ENCODE measurements at regions of chr1 and their contacts with region 1.

Region 1: DNA sequence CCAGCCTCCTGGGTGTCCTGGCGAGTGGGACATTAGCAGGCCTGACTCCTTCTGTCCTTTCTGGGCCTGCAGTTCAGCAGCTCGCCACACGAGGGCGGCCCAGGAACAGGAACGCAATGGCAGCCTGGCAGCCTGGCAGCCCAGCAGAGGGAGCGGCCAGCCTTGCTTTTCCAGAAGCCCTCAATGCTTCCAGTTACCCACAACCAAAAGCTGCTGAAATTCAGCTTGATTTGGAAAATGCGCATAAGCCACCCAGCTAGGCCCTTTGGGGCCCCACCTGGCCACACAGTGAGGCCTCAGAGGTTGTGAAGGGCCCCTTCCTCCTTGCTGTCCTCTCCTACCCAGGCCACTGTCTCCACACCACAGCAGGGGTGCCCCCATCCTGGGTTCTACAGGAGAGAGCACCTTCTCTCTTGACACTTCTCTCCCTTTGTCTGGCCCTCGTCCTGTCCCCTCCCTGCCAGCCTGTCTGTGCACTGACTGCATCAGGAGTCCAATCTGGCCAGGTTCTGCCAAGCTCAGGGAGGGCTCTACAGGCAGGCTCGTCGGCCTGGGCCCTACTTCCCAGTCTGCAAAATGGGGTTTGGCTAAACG is 103.4 kb upstream of the VAMP3 start:
- DNase-seq: peak; percentile 91
- H3K4me3 ChIP-seq: no peak overlapping the region
- H3K27ac ChIP-seq: no peak overlapping the region
- H3K4me1 ChIP-seq: peaks cover 0 to 9% (median 6%) of the 10 kb centered on the region in 4 donors
- H3K27me3 ChIP-seq: peaks cover 3% of the 10 kb centered on the region
- CTCF ChIP-seq: peak; percentile 99 to 100 (median 99)
- EP300 ChIP-seq: no peak
- POLR2A ChIP-seq: no peak

Region 2: GRCh38 chr1:7745791-7746190 is 78.1 kb after region 1 on chr1:
- in situ Hi-C with region 1: loop called (anchors 5 to 10 kb)
- intact Hi-C with region 1: no loop called
- DNase-seq: no peak
- H3K4me3 ChIP-seq: no peak overlapping the region
- H3K27ac ChIP-seq: no peak overlapping the region
- H3K4me1 ChIP-seq: no peaks in the 10 kb centered on the region
- H3K27me3 ChIP-seq: no peaks in the 10 kb centered on the region
- CTCF ChIP-seq: no peak
- EP300 ChIP-seq: no peak
- POLR2A ChIP-seq: no peak

Region 3: GRCh38 chr1:7752512-7753417 is 85.0 kb after region 1 on chr1:
- in situ Hi-C with region 1: loop called (anchors 5 to 10 kb)
- intact Hi-C with region 1: loop called (anchors 1 kb)
- DNase-seq: peak; percentile 62
- H3K4me3 ChIP-seq: peak overlapping the region in 2 of 4 donors; percentile 10 to 32
- H3K27ac ChIP-seq: no peak overlapping the region
- H3K4me1 ChIP-seq: peaks cover 0 to 11% (median 3%) of the 10 kb centered on the region in 4 donors
- H3K27me3 ChIP-seq: no peaks in the 10 kb centered on the region
- CTCF ChIP-seq: peak; percentile 75 to 89 (median 83)
- EP300 ChIP-seq: no peak
- POLR2A ChIP-seq: no peak

Region 4: DNA sequence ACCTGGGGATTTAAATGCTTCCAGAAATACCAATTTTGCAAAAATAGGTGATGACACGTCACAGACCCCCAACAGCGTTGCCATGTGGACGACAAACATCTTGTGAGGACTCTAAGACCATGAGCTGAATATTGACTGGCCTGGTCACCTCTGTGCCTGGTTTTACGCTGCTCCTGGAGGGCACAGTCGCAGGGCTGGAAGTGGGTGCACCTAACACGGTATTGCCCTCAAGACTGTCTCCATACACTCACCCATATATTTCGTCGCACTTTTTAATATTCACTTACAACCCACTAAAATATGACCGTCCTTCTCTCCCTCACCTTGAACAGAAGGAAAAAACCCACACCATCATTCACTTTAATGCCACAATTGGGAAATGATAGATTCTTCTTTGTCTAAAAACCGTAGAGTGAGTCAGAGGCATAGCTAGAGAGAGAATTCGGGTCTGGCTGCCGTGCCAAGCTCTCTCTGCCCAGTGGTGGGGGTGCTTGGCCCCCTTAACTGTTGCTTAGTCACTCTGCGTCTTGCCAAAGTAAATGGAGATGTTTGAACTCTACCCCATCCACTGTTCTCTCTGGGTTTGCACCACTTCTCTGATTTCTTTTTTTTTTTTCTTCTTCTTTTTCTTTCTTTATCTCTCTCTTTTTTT is 225.9 kb after region 1 on chr1:
- in situ Hi-C with region 1: no loop called
- intact Hi-C with region 1: loop called (anchors 10 kb)
- DNase-seq: no peak
- H3K4me3 ChIP-seq: no peak overlapping the region
- H3K27ac ChIP-seq: no peak overlapping the region
- H3K4me1 ChIP-seq: no peaks in the 10 kb centered on the region
- H3K27me3 ChIP-seq: peaks cover 8% of the 10 kb centered on the region
- CTCF ChIP-seq: no peak
- EP300 ChIP-seq: no peak
- POLR2A ChIP-seq: no peak

Region 5: DNA sequence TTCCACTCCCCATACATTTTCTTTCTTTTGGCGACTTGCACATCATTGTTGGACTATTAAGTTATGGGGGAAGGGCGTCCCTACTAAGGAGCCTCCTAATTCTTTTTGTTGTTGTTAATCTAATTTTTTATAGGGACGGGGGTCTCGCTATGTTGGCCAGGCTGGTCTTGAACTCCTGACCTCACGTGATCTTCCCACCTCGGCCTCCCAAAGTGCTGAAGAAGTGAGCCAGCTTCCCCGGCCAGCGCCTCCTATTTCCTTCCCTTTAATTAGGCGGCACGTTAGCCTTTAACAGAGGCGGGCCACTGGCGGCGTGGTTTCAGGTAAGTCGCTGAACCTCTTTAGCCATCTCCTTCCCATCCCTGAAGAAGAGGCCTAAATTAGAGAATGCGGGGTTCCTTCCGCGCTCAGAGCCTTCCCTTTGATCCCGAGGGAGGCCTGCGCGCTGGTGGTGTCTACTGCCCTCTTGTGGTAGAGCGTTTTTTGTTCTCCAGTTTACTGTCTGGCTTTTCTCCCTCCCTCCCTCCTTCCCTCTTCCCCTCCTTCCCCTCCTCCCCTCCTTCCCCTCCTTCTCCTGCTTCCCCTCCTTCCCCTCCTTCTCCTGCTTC is 234.9 kb after region 1 on chr1:
- in situ Hi-C with region 1: loop called in 3 of 4 experiments (anchors 10 to 25 kb)
- intact Hi-C with region 1: loop called (anchors 10 kb)
- DNase-seq: peak; percentile 54
- H3K4me3 ChIP-seq: peak overlapping the region in 1 of 4 donors; percentile 42
- H3K27ac ChIP-seq: no peak overlapping the region
- H3K4me1 ChIP-seq: peaks cover 0 to 5% (median 3%) of the 10 kb centered on the region in 4 donors
- H3K27me3 ChIP-seq: no peaks in the 10 kb centered on the region
- CTCF ChIP-seq: peak; percentile 72 to 75 (median 75)
- EP300 ChIP-seq: no peak
- POLR2A ChIP-seq: no peak

Measured in transverse colon (tissue), 4 donors.